ENCODE measurements at regions of chr21 and their contacts with region 1.

Region 1: DNA sequence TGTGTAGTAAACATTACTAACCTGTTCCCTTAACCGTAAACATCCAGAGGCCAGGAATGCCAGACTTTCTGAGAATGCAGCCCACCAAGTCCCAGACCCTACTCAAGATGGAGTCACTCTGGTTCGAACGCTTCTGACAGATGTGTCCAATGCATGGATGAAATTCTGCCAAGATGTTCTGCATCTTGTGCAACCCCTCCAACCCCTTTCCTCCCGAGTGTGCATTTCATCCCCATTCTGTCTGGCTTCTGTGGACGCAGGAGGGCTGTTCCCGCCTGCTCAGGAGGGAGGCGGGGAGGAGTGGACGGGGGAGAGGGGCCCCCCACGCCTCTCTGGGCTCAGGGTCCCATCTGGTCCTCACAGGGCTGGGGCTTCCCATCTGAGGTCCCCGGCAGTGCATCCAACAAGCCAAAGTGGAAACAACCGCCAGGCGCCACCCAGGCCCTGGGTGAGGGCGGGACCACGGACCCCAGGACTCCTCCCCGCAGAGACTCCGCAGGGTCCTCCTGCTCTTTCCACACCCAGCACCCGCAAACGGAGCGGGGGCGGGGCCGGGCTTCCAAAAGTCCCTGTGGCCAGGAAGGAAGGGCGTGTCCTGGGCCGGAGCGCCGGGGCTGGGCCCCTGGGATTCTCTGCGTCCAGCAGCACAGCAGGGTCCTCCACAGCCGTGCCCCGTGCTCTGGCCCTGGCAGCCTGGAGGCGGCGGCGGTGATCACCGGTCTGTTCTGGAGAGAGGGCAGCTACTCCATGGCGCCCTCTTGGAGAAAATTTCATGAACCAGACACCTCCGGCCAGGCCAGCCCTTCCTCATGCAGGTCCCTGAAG is 27.7 kb upstream of the SUMO3 start:
- ATAC-seq: peak; percentile 62 to 95 (median 90)
- H3K4me3 ChIP-seq: peak overlapping the region in 1 of 5 donors; percentile 7
- H3K27ac ChIP-seq: no peak overlapping the region
- H3K4me1 ChIP-seq: peaks cover 5 to 8% of the 10 kb centered on the region in 2 donors

Region 2: GRCh38 chr21:43611598-43612369 is 1233.8 kb before region 1 on chr21:
- in situ Hi-C with region 1: no loop called
- ATAC-seq: peak; percentile 29 to 93 (median 68)
- H3K4me3 ChIP-seq: no peak overlapping the region
- H3K27ac ChIP-seq: no peak overlapping the region
- H3K4me1 ChIP-seq: no peaks in the 10 kb centered on the region

Region 3: GRCh38 chr21:44637018-44637850 is 208.4 kb before region 1 on chr21 and contains the start of gene KRTAP10-10:
- in situ Hi-C with region 1: no loop called
- ATAC-seq: peak in 5 of 8 experiments; percentile 75 to 95 (median 93)
- H3K4me3 ChIP-seq: no peak within 1 kb of the TSS
- H3K27ac ChIP-seq: no peak within 1 kb of the TSS
- H3K4me1 ChIP-seq: no peaks in the 10 kb centered on the region
- total RNA-seq, gene KRTAP10-10: 0.17 to 1.1 (median 0.51) TPM in 4 of 8 experiments, not detected in the others

Region 4: GRCh38 chr21:44742418-44743153 is 103.0 kb before region 1 on chr21:
- in situ Hi-C with region 1: loop called in 1 of 9 experiments (anchors 25 kb)
- ATAC-seq: peak in 3 of 8 experiments; percentile 41 to 72 (median 63)
- H3K4me3 ChIP-seq: no peak overlapping the region
- H3K27ac ChIP-seq: no peak overlapping the region
- H3K4me1 ChIP-seq: no peaks in the 10 kb centered on the region

Region 5: GRCh38 chr21:45098867-45099266 is 253.3 kb after region 1 on chr21:
- in situ Hi-C with region 1: no loop called
- ATAC-seq: peak in 2 of 8 experiments; percentile 20 to 28
- H3K4me3 ChIP-seq: no peak overlapping the region
- H3K27ac ChIP-seq: no peak overlapping the region
- H3K4me1 ChIP-seq: no peaks in the 10 kb centered on the region

Measured in motor neuron (in vitro differentiated cells).